ENCODE measurements at regions of chr15 and their contacts with region 1.

Region 1: DNA sequence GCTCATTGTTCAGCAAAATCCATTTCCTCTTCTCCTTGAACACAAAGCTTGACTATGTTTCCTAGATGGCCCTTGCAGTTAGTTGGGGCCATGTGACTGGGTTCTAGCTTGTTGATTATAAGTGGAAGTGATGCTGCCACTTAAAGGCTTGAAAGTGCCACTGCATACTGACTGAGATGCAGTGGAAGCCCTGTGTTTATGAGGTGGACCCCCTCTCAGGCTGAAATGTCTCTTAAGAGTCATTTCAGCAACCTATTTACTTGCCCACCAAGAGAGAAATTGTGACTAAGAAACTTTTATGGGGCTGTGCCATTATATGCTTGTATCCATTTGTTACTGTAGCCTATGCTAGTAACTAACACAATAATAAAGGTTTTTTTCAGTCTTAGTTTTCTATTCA is 8.4 kb upstream of the ANP32A start:
- DNase-seq: no peak
- H3K4me3 Mint-ChIP-seq: no peak overlapping the region
- H3K27ac Mint-ChIP-seq: no peak overlapping the region
- H3K4me1 Mint-ChIP-seq: peaks cover 15% of the 10 kb centered on the region
- H3K27me3 Mint-ChIP-seq: peaks cover 12% of the 10 kb centered on the region

Region 2: GRCh38 chr15:68335251-68335650 is 493.8 kb before region 1 on chr15:
- intact Hi-C with region 1: no loop called
- DNase-seq: no peak
- H3K4me3 Mint-ChIP-seq: no peak overlapping the region
- H3K27ac Mint-ChIP-seq: no peak overlapping the region
- H3K4me1 Mint-ChIP-seq: no peaks in the 10 kb centered on the region
- H3K27me3 Mint-ChIP-seq: no peaks in the 10 kb centered on the region

Region 3: GRCh38 chr15:68631601-68632051 is 197.4 kb before region 1 on chr15:
- intact Hi-C with region 1: no loop called
- DNase-seq: no peak
- H3K4me3 Mint-ChIP-seq: no peak overlapping the region
- H3K27ac Mint-ChIP-seq: no peak overlapping the region
- H3K4me1 Mint-ChIP-seq: no peaks in the 10 kb centered on the region
- H3K27me3 Mint-ChIP-seq: peaks cover 4% of the 10 kb centered on the region

Region 4: GRCh38 chr15:68730471-68730919 is 98.6 kb before region 1 on chr15:
- intact Hi-C with region 1: loop called (anchors 5 kb)
- DNase-seq: no peak
- H3K4me3 Mint-ChIP-seq: no peak overlapping the region
- H3K27ac Mint-ChIP-seq: no peak overlapping the region
- H3K4me1 Mint-ChIP-seq: peaks cover 3% of the 10 kb centered on the region
- H3K27me3 Mint-ChIP-seq: peaks cover 22% of the 10 kb centered on the region

Region 5: GRCh38 chr15:68783226-68784058 is 45.6 kb before region 1 on chr15:
- intact Hi-C with region 1: loop called (anchors 2 kb)
- DNase-seq: peak; percentile 30
- H3K4me3 Mint-ChIP-seq: no peak overlapping the region
- H3K27ac Mint-ChIP-seq: peak overlapping the region; percentile 49
- H3K4me1 Mint-ChIP-seq: peaks cover 40% of the 10 kb centered on the region
- H3K27me3 Mint-ChIP-seq: no peaks in the 10 kb centered on the region

Region 6: DNA sequence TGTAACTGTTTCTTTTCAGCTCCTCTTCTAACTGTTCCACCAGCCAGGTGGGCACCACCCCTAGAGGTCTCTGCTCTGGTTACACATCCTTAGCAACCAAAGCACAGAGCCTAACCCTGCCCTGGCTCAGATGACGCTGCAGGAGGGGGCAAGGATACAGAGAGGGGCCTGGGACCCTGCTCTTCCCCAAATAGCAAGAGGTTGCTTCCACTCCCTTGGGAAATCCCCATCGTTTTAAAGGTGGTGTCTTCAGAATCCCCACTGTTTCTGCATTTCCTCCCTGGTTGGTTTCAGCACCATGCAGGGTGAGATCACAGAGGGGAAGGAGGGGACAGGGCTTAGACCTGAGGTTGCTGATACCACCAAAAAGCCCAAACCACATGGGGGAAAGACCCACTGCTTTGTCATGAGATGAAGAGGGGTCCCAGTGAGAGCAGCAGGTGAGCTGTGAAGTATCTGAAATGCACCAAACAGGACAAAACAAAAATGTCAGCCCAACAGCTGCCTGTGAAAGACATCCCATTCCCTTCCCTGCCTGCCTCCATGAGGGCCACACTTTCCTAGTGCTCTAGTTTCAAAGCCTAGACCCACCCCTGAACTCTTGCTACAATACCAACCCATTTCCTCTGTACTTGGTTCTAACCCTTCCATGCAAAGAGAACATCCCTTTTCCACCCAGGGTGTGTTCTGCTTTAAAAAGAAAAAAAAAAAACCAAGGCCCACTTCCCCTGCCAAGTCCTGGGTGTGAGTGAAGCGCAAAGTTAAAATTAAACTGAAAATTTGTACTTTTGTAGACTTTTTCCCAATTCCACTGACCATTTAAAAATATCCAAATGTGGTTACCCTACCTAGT is 37.4 kb before region 1 on chr15:
- intact Hi-C with region 1: loop called (anchors 2 kb)
- DNase-seq: peak; percentile 26
- H3K4me3 Mint-ChIP-seq: peak overlapping the region; percentile 52
- H3K27ac Mint-ChIP-seq: peak overlapping the region; percentile 93
- H3K4me1 Mint-ChIP-seq: peaks cover 68% of the 10 kb centered on the region
- H3K27me3 Mint-ChIP-seq: no peaks in the 10 kb centered on the region